ENCODE measurements at regions of chr20 and their contacts with region 1.

Region 1: DNA sequence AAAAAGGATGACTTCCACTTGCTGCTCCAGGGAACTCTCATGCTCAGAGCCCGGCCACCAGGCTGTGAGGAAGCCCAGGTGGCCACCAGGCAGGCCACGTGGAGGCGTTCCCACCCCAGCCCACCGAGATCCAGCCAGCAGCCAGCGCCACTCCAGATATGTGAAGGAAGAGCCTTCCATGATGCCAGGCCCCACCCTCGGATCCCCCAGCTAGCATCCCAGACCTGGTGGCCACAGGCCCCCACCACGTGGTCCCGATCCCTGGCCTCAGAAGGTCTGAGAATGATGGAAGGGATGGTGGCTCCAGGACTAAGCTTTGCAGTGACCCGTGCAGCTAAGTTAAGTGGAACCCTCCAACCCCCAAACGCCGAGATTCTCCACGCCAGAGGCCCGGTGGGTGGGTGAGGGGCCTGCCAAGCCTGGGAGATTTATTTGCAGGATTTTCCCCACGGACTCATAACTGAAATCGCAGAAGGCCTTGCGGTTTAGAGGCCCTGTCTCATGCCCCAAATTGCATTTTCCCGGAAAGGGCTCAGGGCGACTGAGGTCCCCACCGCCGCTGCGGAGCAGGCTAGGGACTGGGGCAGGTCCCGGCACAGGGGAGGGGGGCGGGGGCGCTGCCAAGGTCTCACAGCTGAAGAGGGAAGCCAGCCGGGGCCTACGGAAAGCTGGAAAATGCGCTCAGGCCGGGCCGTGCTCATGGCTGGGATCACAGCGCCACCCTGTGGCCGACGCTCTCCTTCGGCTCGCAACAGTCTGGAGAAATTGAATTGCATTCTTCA is 31.1 kb upstream of the CST7 start:
- DNase-seq: peak; percentile 58
- ATAC-seq: peak; percentile 98
- H3K4me3 ChIP-seq: no peak overlapping the region
- H3K27ac ChIP-seq: no peak overlapping the region
- H3K4me1 ChIP-seq: no peaks in the 10 kb centered on the region
- H3K27me3 ChIP-seq: peaks cover 20% of the 10 kb centered on the region; the same call in 1 of the 2 replicates
- CTCF ChIP-seq: peak; percentile 92
- POLR2A ChIP-seq: peak; percentile 34; the same call in 1 of the 2 replicates
- RAD21 ChIP-seq: peak; percentile 95

Region 2: GRCh38 chr20:23889775-23890211 is 1028.2 kb before region 1 on chr20:
- CTCF ChIA-PET with region 1: no interaction called
- POLR2A ChIA-PET with region 1: no interaction called
- dilution Hi-C with region 1: no loop called
- in situ Hi-C with region 1: no loop called
- intact Hi-C with region 1: loop called (anchors 2 kb)
- DNase-seq: peak; percentile 24
- ATAC-seq: peak; percentile 93
- H3K4me3 ChIP-seq: no peak overlapping the region
- H3K27ac ChIP-seq: no peak overlapping the region
- H3K4me1 ChIP-seq: no peaks in the 10 kb centered on the region
- H3K27me3 ChIP-seq: no peaks in the 10 kb centered on the region
- CTCF ChIP-seq: peak; percentile 61
- POLR2A ChIP-seq: no peak
- RAD21 ChIP-seq: peak; percentile 69

Region 3: DNA sequence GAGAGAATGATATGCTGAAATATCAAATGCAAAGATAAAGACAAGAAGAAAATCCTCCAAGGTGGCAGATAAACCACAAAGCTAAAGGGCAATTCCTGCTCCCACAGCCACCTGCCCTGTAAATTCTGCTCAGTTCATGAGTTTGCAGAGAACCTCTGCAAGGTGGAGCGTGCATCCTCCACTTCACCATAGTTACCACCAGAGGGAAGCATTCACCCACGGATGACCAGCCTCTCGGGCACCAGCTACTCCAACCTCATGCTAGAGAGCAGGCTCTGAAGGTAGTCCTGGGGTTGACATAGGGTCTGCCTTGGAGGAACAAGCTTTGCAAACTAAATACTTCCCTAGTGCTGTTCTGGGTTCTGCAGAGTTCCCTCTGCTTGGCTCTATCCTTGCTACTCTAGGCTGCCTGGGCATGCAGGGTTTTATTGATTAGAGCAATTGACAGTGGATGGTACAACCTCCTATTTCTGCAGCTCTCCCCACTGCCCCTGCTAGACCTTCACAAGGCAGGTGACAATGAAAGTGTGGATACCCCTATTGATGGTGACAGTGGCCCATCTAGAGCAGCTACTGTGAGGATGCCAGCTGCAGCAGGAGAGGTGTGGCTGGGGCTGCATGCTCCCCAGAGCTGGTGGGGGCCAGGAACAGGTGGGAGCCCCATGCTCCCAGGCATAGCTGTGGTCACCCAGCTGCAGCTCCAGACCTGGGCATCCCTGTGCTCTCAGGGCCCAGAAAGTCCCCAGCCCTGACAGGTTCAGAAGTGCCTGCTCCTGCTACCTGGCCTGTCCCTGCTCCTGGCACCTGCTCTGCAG is 980.5 kb before region 1 on chr20:
- CTCF ChIA-PET with region 1: no interaction called
- POLR2A ChIA-PET with region 1: no interaction called
- dilution Hi-C with region 1: no loop called
- in situ Hi-C with region 1: loop called (anchors 25 kb)
- intact Hi-C with region 1: loop called (anchors 1 kb)
- DNase-seq: peak; percentile 36
- ATAC-seq: peak; percentile 97
- H3K4me3 ChIP-seq: no peak overlapping the region
- H3K27ac ChIP-seq: no peak overlapping the region
- H3K4me1 ChIP-seq: no peaks in the 10 kb centered on the region
- H3K27me3 ChIP-seq: no peaks in the 10 kb centered on the region
- CTCF ChIP-seq: peak; percentile 65
- POLR2A ChIP-seq: no peak
- RAD21 ChIP-seq: peak; percentile 78

Region 4: GRCh38 chr20:24100385-24101011 is 817.5 kb before region 1 on chr20:
- CTCF ChIA-PET with region 1: no interaction called
- POLR2A ChIA-PET with region 1: no interaction called
- dilution Hi-C with region 1: no loop called
- in situ Hi-C with region 1: no loop called
- intact Hi-C with region 1: loop called (anchors 2 kb)
- DNase-seq: peak; percentile 47
- ATAC-seq: peak; percentile 80; the same call in 1 of the 2 replicates
- H3K4me3 ChIP-seq: no peak overlapping the region
- H3K27ac ChIP-seq: no peak overlapping the region
- H3K4me1 ChIP-seq: no peaks in the 10 kb centered on the region
- H3K27me3 ChIP-seq: no peaks in the 10 kb centered on the region; the same call in 1 of the 2 replicates
- CTCF ChIP-seq: peak; percentile 58
- POLR2A ChIP-seq: no peak
- RAD21 ChIP-seq: 0 out of 2 replicates have a peak, but pooled peaks have one; percentile 15

Region 5: GRCh38 chr20:24160563-24161375 is 757.2 kb before region 1 on chr20:
- CTCF ChIA-PET with region 1: interaction called, 7 read pairs
- POLR2A ChIA-PET with region 1: no interaction called
- dilution Hi-C with region 1: no loop called
- in situ Hi-C with region 1: loop called (anchors 5 kb)
- intact Hi-C with region 1: loop called (anchors 1 kb)
- DNase-seq: peak; percentile 63
- ATAC-seq: peak; percentile 87
- H3K4me3 ChIP-seq: no peak overlapping the region
- H3K27ac ChIP-seq: no peak overlapping the region
- H3K4me1 ChIP-seq: no peaks in the 10 kb centered on the region
- H3K27me3 ChIP-seq: no peaks in the 10 kb centered on the region
- CTCF ChIP-seq: peak; percentile 77
- POLR2A ChIP-seq: no peak
- RAD21 ChIP-seq: peak; percentile 65

Region 6: DNA sequence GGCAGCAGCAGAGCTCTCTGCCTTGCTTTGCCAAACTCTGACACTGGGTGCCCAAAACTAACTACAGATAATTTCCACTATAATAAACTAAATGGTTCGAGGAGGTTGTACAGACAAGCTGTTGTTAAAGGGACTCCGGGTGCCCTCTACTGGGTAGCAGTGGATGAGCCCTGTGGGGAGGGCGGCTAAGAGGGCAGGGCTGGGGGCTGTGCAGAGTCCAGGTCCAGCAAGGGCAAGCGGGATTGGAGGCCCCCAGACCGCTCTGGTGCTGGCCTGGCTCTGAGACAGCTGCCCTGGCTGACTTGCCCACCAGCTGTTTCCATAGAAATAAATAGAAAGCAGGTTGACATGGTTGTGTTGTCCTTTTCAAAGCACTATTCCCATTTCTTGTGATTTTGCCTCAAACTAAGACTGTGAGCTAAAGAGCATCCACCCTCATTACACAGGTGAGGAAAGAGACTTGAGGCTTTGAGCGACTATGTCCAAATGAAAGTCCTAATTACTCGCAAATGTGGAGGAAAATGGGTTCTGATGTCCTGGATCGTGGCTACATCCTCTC is 136.5 kb before region 1 on chr20:
- CTCF ChIA-PET with region 1: no interaction called
- POLR2A ChIA-PET with region 1: no interaction called
- dilution Hi-C with region 1: no loop called
- in situ Hi-C with region 1: no loop called
- intact Hi-C with region 1: loop called (anchors 2 kb)
- DNase-seq: peak; percentile 36
- ATAC-seq: peak; percentile 87
- H3K4me3 ChIP-seq: no peak overlapping the region
- H3K27ac ChIP-seq: no peak overlapping the region
- H3K4me1 ChIP-seq: no peaks in the 10 kb centered on the region
- H3K27me3 ChIP-seq: peaks cover 43% of the 10 kb centered on the region
- CTCF ChIP-seq: peak; percentile 58
- POLR2A ChIP-seq: no peak
- RAD21 ChIP-seq: peak; percentile 71

Measured in IMR-90 (cell line).